ENCODE measurements at regions of chr1 and their contacts with region 1.

Region 1: DNA sequence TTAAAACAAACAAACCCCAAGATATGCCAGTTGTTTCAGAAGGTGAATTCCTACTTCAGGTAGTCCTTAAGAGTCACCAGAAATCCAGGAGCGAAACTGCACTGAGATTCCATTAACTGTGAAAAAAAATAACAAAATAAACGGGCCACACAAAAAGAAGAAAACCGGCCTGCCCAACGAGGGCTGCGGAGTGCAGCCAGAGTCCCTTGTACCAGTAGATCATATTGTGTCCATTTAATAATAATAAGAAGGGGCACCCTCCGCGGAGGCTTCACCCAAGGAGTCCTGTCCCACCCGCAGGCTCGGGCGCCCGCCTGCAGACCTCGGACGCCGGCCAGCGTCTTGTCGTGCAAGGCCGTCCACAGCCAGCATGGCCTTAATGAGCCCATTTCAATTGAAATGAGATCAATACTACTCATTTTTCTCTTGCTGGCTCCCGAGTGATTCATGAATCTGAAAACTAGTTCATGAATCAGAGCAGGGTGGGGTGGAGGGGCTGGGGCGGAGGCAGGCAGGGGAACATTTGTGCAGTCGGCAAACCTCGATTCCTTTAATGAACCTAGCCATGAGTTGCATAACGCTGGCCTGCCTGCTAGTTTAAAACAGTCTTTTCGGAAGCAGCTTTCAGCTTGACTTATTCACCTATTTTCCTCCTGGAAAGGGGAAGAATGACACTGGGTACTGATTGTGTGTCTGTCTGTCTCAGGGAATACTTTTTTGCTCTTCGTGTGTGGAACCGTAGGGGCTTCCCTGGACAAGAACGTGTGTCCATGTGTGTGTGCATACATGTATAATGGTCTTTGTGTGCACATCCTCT is 113.1 kb upstream of the IRF2BP2 start:
- DNase-seq: peak; percentile 99
- H3K4me3 Mint-ChIP-seq: peak overlapping the region; percentile 61
- H3K27ac Mint-ChIP-seq: peak overlapping the region; percentile 96
- H3K4me1 Mint-ChIP-seq: peaks cover 77% of the 10 kb centered on the region
- H3K27me3 Mint-ChIP-seq: no peaks in the 10 kb centered on the region
- CTCF ChIP-seq: no peak

Region 2: DNA sequence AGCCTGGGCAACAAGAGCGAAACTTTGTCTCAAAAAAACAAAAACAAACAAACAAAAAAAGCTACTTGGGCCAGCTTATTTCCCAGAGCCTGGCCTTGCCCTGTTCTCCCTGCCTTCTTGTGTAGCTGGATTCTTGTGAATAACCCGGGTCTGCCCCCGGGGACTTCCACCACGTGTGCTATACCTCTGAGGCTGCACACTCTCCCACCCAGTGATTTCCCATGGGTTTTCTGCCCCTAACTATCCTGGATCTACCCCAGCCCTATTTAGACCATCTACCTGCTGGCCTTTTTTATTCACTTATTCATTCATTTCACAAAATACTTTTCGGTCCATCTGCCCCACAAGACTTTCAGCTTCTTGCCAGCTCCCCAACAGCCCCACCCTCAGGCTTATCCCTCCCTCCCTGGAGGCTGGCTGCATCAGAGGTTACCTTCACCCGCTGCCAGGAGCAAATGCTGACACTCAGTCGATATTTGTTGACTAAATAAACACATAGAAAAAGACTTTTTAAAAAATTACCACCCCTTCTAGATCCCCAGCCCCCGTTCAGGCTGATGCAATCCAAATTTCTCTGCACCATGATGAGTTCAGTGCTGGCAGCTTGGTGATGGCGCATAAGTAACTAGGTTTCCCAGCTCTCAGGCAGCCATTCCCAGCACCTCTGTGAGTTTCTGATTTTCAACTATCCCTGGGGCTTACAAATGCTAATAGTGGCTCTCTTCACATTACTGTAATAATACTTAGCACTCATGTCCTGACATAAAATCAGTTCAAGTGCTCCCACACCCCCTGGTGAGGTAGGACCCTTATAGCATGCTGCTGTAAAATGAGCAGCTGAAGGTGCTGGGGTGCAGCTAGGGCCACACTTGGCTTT is 213.4 kb before region 1 on chr1:
- CTCF ChIA-PET with region 1: no interaction called
- POLR2A ChIA-PET with region 1: interaction called, 18 read pairs
- intact Hi-C with region 1: no loop called
- DNase-seq: peak; percentile 84
- H3K4me3 Mint-ChIP-seq: peak overlapping the region; percentile 52
- H3K27ac Mint-ChIP-seq: peak overlapping the region; percentile 85
- H3K4me1 Mint-ChIP-seq: peaks cover 46% of the 10 kb centered on the region
- H3K27me3 Mint-ChIP-seq: no peaks in the 10 kb centered on the region
- CTCF ChIP-seq: no peak

Region 3: GRCh38 chr1:234599617-234600417 is 123.3 kb before region 1 on chr1:
- CTCF ChIA-PET with region 1: interaction called, 12 read pairs
- POLR2A ChIA-PET with region 1: interaction called, 188 read pairs
- intact Hi-C with region 1: no loop called
- DNase-seq: peak; percentile 93
- H3K4me3 Mint-ChIP-seq: peak overlapping the region; percentile 80
- H3K27ac Mint-ChIP-seq: peak overlapping the region; percentile 90
- H3K4me1 Mint-ChIP-seq: peaks cover 41% of the 10 kb centered on the region
- H3K27me3 Mint-ChIP-seq: no peaks in the 10 kb centered on the region
- CTCF ChIP-seq: no peak

Region 4: DNA sequence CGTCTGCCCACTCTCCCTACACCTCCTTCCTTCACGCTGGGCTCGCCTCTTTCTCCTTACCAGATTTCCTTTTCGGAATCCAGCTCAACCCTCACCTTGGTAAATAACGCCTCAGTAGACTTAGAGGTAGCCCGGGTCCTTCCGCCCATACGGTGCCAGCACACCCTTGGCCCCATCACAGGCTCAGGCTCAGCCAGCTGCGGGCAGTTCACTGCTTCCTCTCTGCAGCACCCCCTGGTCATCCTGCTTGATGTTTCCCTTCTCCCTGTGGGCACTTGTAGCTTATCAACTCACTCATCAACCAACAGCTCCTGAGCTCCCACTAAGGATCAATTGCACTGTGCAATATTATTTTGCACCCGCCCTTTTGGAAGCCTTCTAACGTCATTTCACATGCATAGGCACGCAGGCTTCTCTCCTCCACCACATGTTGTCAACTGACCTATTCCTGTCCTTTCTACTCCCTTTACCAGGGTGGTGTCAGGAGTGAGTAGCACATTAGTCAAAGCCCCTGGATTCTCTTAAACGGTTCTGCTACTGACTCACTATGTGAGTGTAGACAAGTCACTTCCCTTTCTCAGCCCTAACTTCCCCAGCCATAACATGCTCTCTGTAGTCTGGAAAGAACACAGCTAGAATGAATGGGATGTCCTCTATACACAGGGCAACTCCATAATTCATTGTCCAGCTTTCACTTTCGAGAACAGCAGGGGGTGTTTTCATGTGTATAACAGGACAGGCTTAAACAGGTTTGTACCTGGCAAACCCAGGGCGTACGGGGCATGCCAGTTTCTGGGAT is 66.1 kb before region 1 on chr1:
- CTCF ChIA-PET with region 1: interaction called, 18 read pairs
- POLR2A ChIA-PET with region 1: interaction called, 213 read pairs
- intact Hi-C with region 1: loop called (anchors 1 kb)
- DNase-seq: peak; percentile 100
- H3K4me3 Mint-ChIP-seq: peak overlapping the region; percentile 67
- H3K27ac Mint-ChIP-seq: peak overlapping the region; percentile 91
- H3K4me1 Mint-ChIP-seq: peaks cover 57% of the 10 kb centered on the region
- H3K27me3 Mint-ChIP-seq: no peaks in the 10 kb centered on the region
- CTCF ChIP-seq: no peak

Region 5: GRCh38 chr1:234755449-234755863 is 32.3 kb after region 1 on chr1:
- CTCF ChIA-PET with region 1: no interaction called
- POLR2A ChIA-PET with region 1: interaction called, 23 read pairs
- intact Hi-C with region 1: no loop called
- DNase-seq: peak; percentile 93
- H3K4me3 Mint-ChIP-seq: no peak overlapping the region
- H3K27ac Mint-ChIP-seq: no peak overlapping the region
- H3K4me1 Mint-ChIP-seq: no peaks in the 10 kb centered on the region
- H3K27me3 Mint-ChIP-seq: peaks cover 20% of the 10 kb centered on the region
- CTCF ChIP-seq: no peak

Region 6: GRCh38 chr1:234978397-234979295 is 255.5 kb after region 1 on chr1:
- CTCF ChIA-PET with region 1: interaction called, 3 read pairs
- POLR2A ChIA-PET with region 1: interaction called, 14 read pairs
- intact Hi-C with region 1: no loop called
- DNase-seq: peak; percentile 68
- H3K4me3 Mint-ChIP-seq: peak overlapping the region; percentile 20
- H3K27ac Mint-ChIP-seq: peak overlapping the region; percentile 96
- H3K4me1 Mint-ChIP-seq: peaks cover 50% of the 10 kb centered on the region
- H3K27me3 Mint-ChIP-seq: no peaks in the 10 kb centered on the region
- CTCF ChIP-seq: no peak

Region 7: GRCh38 chr1:235060607-235061470 is 337.7 kb after region 1 on chr1:
- CTCF ChIA-PET with region 1: interaction called, 4 read pairs
- POLR2A ChIA-PET with region 1: interaction called, 11 read pairs
- intact Hi-C with region 1: loop called (anchors 1 kb)
- DNase-seq: peak; percentile 76
- H3K4me3 Mint-ChIP-seq: no peak overlapping the region
- H3K27ac Mint-ChIP-seq: no peak overlapping the region
- H3K4me1 Mint-ChIP-seq: peaks cover 38% of the 10 kb centered on the region
- H3K27me3 Mint-ChIP-seq: no peaks in the 10 kb centered on the region
- CTCF ChIP-seq: no peak